ENCODE measurements at regions of chr2 and their contacts with region 1.

Region 1: GRCh38 chr2:234135720-234136221 is 85.3 kb downstream of the SPP2 start:
- DNase-seq: peak; percentile 29 to 72 (median 59)
- H3K4me3 ChIP-seq: peak overlapping the region in 1 of 59 donors; percentile 34
- H3K27ac ChIP-seq: no peak overlapping the region
- H3K27me3 ChIP-seq: peaks cover 0 to 14% (median 0%) of the 10 kb centered on the region in 45 donors
- CTCF ChIP-seq: peak; percentile 28 to 85 (median 72)

Region 2: GRCh38 chr2:233938676-233939370 is 196.9 kb before region 1 on chr2:
- intact Hi-C with region 1: no loop called
- DNase-seq: no peak
- H3K4me3 ChIP-seq: peak overlapping the region in 38 of 59 donors; percentile 4 to 55 (median 36)
- H3K27ac ChIP-seq: no peak overlapping the region
- H3K27me3 ChIP-seq: peaks cover 0 to 30% (median 3%) of the 10 kb centered on the region in 45 donors
- CTCF ChIP-seq: no peak

Region 3: GRCh38 chr2:233976690-233977294 is 159.0 kb before region 1 on chr2:
- intact Hi-C with region 1: loop called in 1 of 2 experiments (anchors 5 kb)
- DNase-seq: peak in 1 of 10 donors; percentile 36
- H3K4me3 ChIP-seq: no peak overlapping the region
- H3K27ac ChIP-seq: no peak overlapping the region
- H3K27me3 ChIP-seq: no peaks in the 10 kb centered on the region
- CTCF ChIP-seq: peak in 55 of 56 donors; percentile 15 to 75 (median 54)

Region 4: GRCh38 chr2:234500394-234501006 is 364.7 kb after region 1 on chr2:
- intact Hi-C with region 1: loop called (anchors 2 to 5 kb)
- DNase-seq: peak in 6 of 10 donors; percentile 22 to 64 (median 52)
- H3K4me3 ChIP-seq: no peak overlapping the region
- H3K27ac ChIP-seq: no peak overlapping the region
- H3K27me3 ChIP-seq: peaks cover 0 to 3% (median 0%) of the 10 kb centered on the region in 45 donors
- CTCF ChIP-seq: peak in 53 of 56 donors; percentile 25 to 78 (median 60)

Region 5: GRCh38 chr2:234544659-234545611 is 409.2 kb after region 1 on chr2:
- intact Hi-C with region 1: loop called in 1 of 2 experiments (anchors 5 kb)
- DNase-seq: peak; percentile 50 to 78 (median 64)
- H3K4me3 ChIP-seq: peak overlapping the region in 4 of 59 donors; percentile 2 to 33 (median 12)
- H3K27ac ChIP-seq: no peak overlapping the region
- H3K27me3 ChIP-seq: peaks cover 0 to 12% (median 0%) of the 10 kb centered on the region in 45 donors
- CTCF ChIP-seq: peak; percentile 73 to 98 (median 94)

Region 6: GRCh38 chr2:235116885-235117492 is 981.2 kb after region 1 on chr2:
- intact Hi-C with region 1: loop called in 1 of 2 experiments (anchors 5 kb)
- DNase-seq: no peak
- H3K4me3 ChIP-seq: no peak overlapping the region
- H3K27ac ChIP-seq: no peak overlapping the region
- H3K27me3 ChIP-seq: peaks cover 0 to 5% (median 0%) of the 10 kb centered on the region in 45 donors
- CTCF ChIP-seq: peak; percentile 76 to 99 (median 89)